Naive thymus-derived CD8-positive, alpha-beta T cell (primary cell): ENCODE measurements at regions of chr14 and their contacts with region 1.

Region 1: GRCh38 chr14:73491256-73492042 is 716 bp downstream of the RIOX1 start:
- DNase-seq: peak in 8 of 10 donors; percentile 44 to 71 (median 54)
- ATAC-seq: peak; percentile 64 to 68
- H3K4me3 Mint-ChIP-seq: peak overlapping the region; percentile 80 to 91 (median 89)
- H3K27ac Mint-ChIP-seq: peak overlapping the region; percentile 29 to 94 (median 91)
- H3K4me1 Mint-ChIP-seq: peaks cover 17 to 56% (median 50%) of the 10 kb centered on the region in 4 donors
- H3K27me3 Mint-ChIP-seq: peaks cover 0 to 3% (median 0%) of the 10 kb centered on the region in 5 donors

Region 2: DNA sequence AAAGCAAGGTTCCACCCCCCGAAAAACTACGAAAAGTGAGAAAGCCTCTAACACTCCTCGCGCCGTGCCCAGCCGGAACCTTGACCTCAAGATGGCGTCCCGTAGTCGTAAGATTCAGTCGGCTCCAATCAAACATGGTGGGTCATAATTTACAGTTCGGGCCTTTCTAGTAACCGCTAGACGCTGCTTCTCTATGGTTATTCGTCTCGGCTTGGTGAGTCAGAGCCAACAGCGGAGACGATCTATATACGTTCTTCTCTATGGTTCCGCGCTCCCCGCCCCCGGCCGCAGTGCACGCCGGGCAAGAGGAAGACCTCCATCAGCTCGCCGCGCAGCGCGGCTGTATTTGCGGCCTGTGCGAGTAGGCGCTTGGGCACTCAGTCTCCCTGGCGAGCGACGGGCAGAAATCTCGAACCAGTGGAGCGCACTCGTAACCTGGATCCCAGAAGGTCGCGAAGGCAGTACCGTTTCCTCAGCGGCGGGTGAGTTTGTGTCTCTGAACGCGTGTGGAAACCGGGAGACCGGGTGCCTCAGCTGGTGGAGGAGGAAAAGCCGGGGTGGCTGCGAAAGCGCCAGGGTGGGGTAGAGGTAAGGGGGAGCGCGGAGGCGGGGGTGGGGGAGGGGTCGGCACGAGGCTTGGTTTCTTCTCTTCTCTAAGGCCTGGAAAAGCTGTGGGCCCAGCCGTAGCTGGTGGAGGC is 433.1 kb before region 1 on chr14 and contains the start of gene RBM25:
- POLR2A ChIA-PET with region 1: interaction called, 10 read pairs
- DNase-seq: peak; percentile 86 to 97 (median 94)
- ATAC-seq: peak; percentile 91 to 94
- H3K4me3 Mint-ChIP-seq: no peak within 1 kb of the TSS
- H3K27ac Mint-ChIP-seq: no peak within 1 kb of the TSS
- H3K4me1 Mint-ChIP-seq: peaks cover 13 to 51% (median 36%) of the 10 kb centered on the region in 4 donors
- H3K27me3 Mint-ChIP-seq: no peaks in the 10 kb centered on the region
- polyA plus RNA-seq, gene RBM25: 40.7 to 64.8 (median 42.6) TPM

Region 3: DNA sequence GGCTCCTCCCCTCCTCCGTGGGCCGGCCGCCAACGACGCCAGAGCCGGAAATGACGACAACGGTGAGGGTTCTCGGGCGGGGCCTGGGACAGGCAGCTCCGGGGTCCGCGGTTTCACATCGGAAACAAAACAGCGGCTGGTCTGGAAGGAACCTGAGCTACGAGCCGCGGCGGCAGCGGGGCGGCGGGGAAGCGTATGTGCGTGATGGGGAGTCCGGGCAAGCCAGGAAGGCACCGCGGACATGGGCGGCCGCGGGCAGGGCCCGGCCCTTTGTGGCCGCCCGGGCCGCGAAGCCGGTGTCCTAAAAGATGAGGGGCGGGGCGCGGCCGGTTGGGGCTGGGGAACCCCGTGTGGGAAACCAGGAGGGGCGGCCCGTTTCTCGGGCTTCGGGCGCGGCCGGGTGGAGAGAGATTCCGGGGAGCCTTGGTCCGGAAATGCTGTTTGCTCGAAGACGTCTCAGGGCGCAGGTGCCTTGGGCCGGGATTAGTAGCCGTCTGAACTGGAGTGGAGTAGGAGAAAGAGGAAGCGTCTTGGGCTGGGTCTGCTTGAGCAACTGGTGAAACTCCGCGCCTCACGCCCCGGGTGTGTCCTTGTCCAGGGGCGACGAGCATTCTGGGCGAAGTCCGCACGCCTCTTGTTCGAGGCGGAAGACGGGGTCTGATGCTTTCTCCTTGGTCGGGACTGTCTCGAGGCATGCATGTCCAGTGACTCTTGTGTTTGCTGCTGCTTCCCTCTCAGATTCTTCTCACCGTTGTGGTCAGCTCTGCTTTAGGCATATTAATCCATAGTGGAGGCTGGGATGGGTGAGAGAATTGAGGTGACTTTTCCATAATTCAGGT is 354.8 kb before region 1 on chr14 and contains the start of gene PSEN1:
- POLR2A ChIA-PET with region 1: interaction called, 11 read pairs
- DNase-seq: peak; percentile 98 to 100 (median 99)
- ATAC-seq: peak; percentile 91
- H3K4me3 Mint-ChIP-seq: peak within 1 kb of the TSS; percentile 93 to 99 (median 98)
- H3K27ac Mint-ChIP-seq: peak within 1 kb of the TSS; percentile 94 to 100 (median 98)
- H3K4me1 Mint-ChIP-seq: peaks cover 19 to 35% (median 31%) of the 10 kb centered on the region in 4 donors
- H3K27me3 Mint-ChIP-seq: no peaks in the 10 kb centered on the region
- polyA plus RNA-seq, gene PSEN1: 14.7 to 26.1 (median 20.6) TPM

Region 4: GRCh38 chr14:73458151-73458976 is 33.1 kb before region 1 on chr14 and contains the start of gene NUMB:
- POLR2A ChIA-PET with region 1: interaction called, 21 read pairs
- DNase-seq: peak; percentile 83 to 99 (median 96)
- ATAC-seq: peak; percentile 97
- H3K4me3 Mint-ChIP-seq: peak within 1 kb of the TSS; percentile 89 to 100 (median 98)
- H3K27ac Mint-ChIP-seq: peak within 1 kb of the TSS; percentile 92 to 98 (median 96)
- H3K4me1 Mint-ChIP-seq: peaks cover 21 to 47% (median 40%) of the 10 kb centered on the region in 4 donors
- H3K27me3 Mint-ChIP-seq: peaks cover 0 to 2% (median 0%) of the 10 kb centered on the region in 5 donors
- polyA plus RNA-seq, gene NUMB: 24.5 to 34.7 (median 30.6) TPM

Region 5: DNA sequence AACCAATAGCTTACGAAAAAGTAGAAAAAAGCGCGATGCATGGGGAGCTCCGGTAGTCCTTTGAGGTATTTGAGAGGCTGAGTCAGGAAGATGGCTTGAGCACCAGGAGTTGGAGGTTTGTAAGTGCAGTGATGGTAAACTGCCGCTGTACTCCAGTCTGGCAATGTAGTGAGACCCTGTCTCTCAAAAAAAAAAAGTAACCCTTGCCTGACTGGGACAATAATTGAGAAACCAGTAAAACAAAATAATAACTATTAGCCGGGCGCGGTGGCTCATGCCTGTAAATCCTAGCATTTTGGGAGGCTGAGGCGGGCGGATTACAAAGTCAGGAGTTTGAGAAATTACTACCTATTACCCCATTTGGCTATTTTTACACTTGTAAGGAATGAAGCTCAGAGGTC is 76.9 kb after region 1 on chr14:
- POLR2A ChIA-PET with region 1: interaction called, 33 read pairs
- DNase-seq: peak in 2 of 10 donors; percentile 4 to 18
- ATAC-seq: peak in 1 of 2 donors; percentile 7
- H3K4me3 Mint-ChIP-seq: peak overlapping the region; percentile 79 to 98 (median 95)
- H3K27ac Mint-ChIP-seq: peak overlapping the region; percentile 87 to 99 (median 98)
- H3K4me1 Mint-ChIP-seq: peaks cover 25 to 52% (median 45%) of the 10 kb centered on the region in 4 donors
- H3K27me3 Mint-ChIP-seq: no peaks in the 10 kb centered on the region

Region 6: DNA sequence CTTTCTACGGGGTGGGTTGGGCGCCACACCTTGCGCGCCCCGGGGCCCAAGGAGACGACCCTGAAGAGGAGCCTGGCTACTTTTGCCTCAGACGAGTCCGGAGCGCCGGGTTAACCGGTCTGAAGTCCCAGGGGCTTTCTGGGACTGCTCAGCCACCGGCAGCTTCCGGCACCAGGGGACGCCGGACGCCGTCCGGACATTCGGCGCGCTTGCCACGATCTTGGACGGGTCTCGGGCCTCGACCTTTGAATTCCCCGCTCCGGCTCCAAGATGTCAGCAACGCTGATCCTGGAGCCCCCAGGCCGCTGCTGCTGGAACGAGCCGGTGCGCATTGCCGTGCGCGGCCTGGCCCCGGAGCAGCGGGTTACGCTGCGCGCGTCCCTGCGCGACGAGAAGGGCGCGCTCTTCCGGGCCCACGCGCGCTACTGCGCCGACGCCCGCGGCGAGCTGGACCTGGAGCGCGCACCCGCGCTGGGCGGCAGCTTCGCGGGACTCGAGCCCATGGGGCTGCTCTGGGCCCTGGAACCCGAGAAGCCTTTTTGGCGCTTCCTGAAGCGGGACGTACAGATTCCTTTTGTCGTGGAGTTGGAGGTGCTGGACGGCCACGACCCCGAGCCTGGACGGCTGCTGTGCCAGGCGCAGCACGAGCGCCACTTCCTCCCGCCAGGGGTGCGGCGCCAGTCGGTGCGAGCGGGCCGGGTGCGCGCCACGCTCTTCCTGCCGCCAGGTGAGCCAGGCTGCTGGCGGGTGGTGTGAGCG is 100.4 kb after region 1 on chr14 and contains the start of gene ACOT4:
- POLR2A ChIA-PET with region 1: interaction called, 10 read pairs
- DNase-seq: peak; percentile 21 to 71 (median 55)
- ATAC-seq: peak; percentile 87 to 88
- H3K4me3 Mint-ChIP-seq: peak within 1 kb of the TSS; percentile 68 to 88 (median 78)
- H3K27ac Mint-ChIP-seq: peak within 1 kb of the TSS in 9 of 10 donors; percentile 48 to 89 (median 65)
- H3K4me1 Mint-ChIP-seq: peaks cover 5 to 25% (median 7%) of the 10 kb centered on the region in 4 donors
- H3K27me3 Mint-ChIP-seq: no peaks in the 10 kb centered on the region
- polyA plus RNA-seq, gene ACOT4: 1.9 to 4.0 (median 2.7) TPM

Region 7: GRCh38 chr14:73613046-73613383 is 121.6 kb after region 1 on chr14:
- POLR2A ChIA-PET with region 1: interaction called, 22 read pairs
- DNase-seq: no peak
- ATAC-seq: peak in 1 of 2 donors; percentile 15
- H3K4me3 Mint-ChIP-seq: peak overlapping the region; percentile 81 to 92 (median 86)
- H3K27ac Mint-ChIP-seq: peak overlapping the region; percentile 68 to 94 (median 88)
- H3K4me1 Mint-ChIP-seq: peaks cover 0 to 5% (median 2%) of the 10 kb centered on the region in 4 donors
- H3K27me3 Mint-ChIP-seq: peaks cover 0 to 2% (median 0%) of the 10 kb centered on the region in 5 donors